Adrenal gland (tissue), 19 donors: ENCODE measurements at regions of chr2 and their contacts with region 1.

Region 1: GRCh38 chr2:36918307-36918706 is 48.0 kb downstream of the STRN start:
- DNase-seq: no peak
- H3K4me3 ChIP-seq: no peak overlapping the region
- H3K27ac ChIP-seq: no peak overlapping the region
- H3K4me1 ChIP-seq: peaks cover 0 to 21% of the 10 kb centered on the region in 2 donors
- H3K27me3 ChIP-seq: no peaks in the 10 kb centered on the region
- CTCF ChIP-seq: peak in 3 of 6 experiments; percentile 16 to 47 (median 37)
- POLR2A ChIP-seq: no peak

Region 2: DNA sequence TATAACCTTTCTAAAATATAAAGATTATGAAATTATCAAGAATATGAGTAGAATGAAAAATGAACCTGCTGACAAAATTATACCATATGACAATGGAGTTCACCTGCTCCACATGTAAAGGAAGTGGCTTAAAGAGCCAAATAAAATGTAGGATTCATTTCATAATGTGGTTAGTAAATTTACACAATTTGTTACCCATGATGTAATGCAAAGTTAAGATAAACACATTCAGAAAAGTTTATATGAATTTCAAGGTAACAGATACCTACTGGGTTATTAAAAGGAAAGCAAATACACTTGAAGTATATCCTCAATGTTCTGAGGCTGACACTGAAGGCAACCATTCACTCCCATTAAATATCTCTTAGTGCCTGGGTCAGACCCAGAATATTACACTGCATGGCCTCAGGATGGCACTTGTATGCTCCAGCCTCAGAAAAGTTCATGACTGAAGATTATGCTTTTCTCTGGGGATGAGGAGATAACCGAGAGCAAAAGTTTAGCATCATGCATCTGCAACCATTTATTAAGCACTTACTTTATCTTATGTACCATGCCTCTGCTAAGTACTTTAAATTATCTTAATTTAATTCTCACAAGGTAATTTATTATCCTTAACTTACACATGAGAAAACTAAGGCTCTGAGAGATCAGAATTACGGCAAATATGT is 41.8 kb after region 1 on chr2:
- intact Hi-C with region 1: loop called in 1 of 2 experiments (anchors 5 kb)
- DNase-seq: no peak
- H3K4me3 ChIP-seq: no peak overlapping the region
- H3K27ac ChIP-seq: no peak overlapping the region
- H3K4me1 ChIP-seq: peaks cover 0 to 28% of the 10 kb centered on the region in 2 donors
- H3K27me3 ChIP-seq: no peaks in the 10 kb centered on the region
- CTCF ChIP-seq: no peak
- POLR2A ChIP-seq: no peak

Region 3: DNA sequence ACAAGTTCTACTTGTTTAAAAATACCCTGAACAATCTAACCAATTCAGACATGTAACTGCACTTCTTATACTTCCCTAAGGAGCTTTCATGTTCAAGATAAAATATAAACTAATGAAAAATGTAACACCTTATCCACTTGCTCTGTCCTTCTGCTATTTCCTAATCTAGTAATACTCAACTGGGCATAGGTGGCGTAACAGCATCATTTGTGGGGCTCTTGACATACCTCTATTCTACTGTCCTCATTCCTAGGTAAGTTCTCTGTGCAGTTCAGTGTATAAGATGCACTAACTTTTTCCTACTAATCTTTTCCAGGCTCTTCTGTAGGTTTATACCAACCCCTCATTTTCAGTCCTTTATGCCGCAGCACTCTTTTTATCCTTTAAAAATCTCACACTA is 369.7 kb after region 1 on chr2:
- intact Hi-C with region 1: no loop called
- DNase-seq: peak in 1 of 7 donors; percentile 16
- H3K4me3 ChIP-seq: no peak overlapping the region
- H3K27ac ChIP-seq: no peak overlapping the region
- H3K4me1 ChIP-seq: peaks cover 0 to 3% of the 10 kb centered on the region in 2 donors
- H3K27me3 ChIP-seq: no peaks in the 10 kb centered on the region
- CTCF ChIP-seq: peak in 1 of 6 experiments; percentile 9
- POLR2A ChIP-seq: no peak

Region 4: DNA sequence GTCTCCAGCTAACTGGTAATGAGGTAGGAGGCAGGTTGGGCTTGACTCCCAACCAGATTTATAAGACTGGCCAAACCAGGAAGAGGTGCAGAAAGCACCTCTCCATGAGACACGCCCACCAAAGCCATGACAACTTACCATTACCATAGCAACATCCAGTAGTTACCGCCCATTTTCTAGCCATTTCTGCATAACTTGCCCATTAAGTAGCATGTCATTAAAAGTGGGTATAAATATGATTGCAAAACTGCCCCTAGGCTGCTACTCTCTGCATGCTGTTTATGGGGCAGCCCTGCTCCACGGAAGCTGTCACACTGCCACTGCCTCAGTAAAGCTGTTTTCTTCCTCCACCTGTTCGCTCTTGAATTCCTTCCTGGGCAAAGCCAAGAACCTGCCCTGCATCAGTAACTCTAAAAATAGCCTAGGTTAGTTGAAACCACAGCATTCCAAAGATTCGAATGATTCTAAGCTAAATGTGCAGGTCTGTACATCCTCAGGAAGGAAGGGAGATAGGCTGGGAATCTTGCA is 1326.9 kb after region 1 on chr2:
- intact Hi-C with region 1: no loop called
- DNase-seq: no peak
- H3K4me3 ChIP-seq: no peak overlapping the region
- H3K27ac ChIP-seq: no peak overlapping the region
- H3K4me1 ChIP-seq: no peaks in the 10 kb centered on the region
- H3K27me3 ChIP-seq: no peaks in the 10 kb centered on the region
- CTCF ChIP-seq: no peak
- POLR2A ChIP-seq: no peak